A549 (cell line): ENCODE measurements at regions of chr17 and their contacts with region 1.

Region 1: DNA sequence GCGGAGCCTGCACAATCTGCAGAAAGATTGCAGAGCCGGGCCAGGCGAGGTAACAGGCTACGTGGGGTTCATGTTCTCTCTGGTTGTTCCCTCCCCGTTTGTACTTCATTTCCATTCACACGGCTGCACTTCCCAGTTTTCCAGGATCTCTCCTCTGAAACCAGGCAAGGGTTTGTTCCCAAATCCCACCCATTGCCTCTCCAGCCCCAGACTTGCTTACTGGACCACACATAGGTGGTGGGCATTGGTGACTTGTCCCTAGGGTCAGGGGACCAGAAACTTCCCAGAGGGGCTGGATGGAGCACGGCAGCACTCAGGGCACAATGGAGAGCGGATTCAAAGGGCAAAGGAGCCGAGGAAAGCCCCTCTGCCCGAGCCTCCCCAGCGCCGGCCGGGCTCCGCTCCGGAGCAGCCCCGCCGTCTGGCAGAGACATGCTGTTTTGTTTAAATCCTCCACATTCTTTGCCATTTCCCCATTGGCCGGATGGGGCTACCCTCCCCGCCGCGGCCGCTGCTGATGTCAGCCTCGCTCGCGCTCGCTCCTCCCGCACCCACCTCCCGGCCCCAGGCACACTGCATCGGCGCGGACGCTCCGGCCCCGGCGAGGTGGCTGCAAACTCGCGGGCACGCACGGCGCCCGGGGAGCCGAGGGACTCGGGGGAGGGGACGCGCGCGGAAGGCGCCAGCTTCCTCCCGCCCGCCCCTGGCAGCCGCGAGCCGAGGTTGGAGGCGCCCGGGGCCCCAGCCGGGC is at the start of gene PITPNC1:
- DNase-seq: peak; percentile 84 to 86
- ATAC-seq: peak; percentile 72 to 83
- H3K4me3 ChIP-seq: peak within 1 kb of the TSS; percentile 65
- H3K27ac ChIP-seq: peak within 1 kb of the TSS; percentile 77 to 86
- H3K4me1 ChIP-seq: peaks cover 14% of the 10 kb centered on the region; the same call in 2 of the 3 replicates
- CTCF ChIP-seq: 0 out of 3 replicates have a peak, but pooled peaks have one; percentile 14
- EP300 ChIP-seq: no peak
- POLR2A ChIP-seq: peak; percentile 57
- RAD21 ChIP-seq: no peak
- polyA plus RNA-seq, gene PITPNC1: 10.8 and 11.2 TPM in 2 replicates

Region 2: GRCh38 chr17:67390646-67391384 is 13.9 kb after region 1 on chr17:
- CTCF ChIA-PET with region 1: interaction called, 114 read pairs
- POLR2A ChIA-PET with region 1: no interaction called
- DNase-seq: peak; percentile 42 to 83
- ATAC-seq: peak; percentile 80
- H3K4me3 ChIP-seq: no peak overlapping the region
- H3K27ac ChIP-seq: peak overlapping the region; percentile 54 to 68; a peak in 5 of 6 replicates
- H3K4me1 ChIP-seq: peaks cover 19% of the 10 kb centered on the region
- CTCF ChIP-seq: no peak
- EP300 ChIP-seq: peak in 1 of 2 experiments; percentile 54; a peak in 1 of 5 replicates
- POLR2A ChIP-seq: no peak
- RAD21 ChIP-seq: no peak; a peak in 1 of 5 replicates

Region 3: GRCh38 chr17:67441052-67441927 is 64.4 kb after region 1 on chr17:
- CTCF ChIA-PET with region 1: interaction called, 11 read pairs
- POLR2A ChIA-PET with region 1: interaction called, 4 read pairs
- DNase-seq: peak; percentile 81 to 85
- ATAC-seq: peak; percentile 94 to 96
- H3K4me3 ChIP-seq: peak overlapping the region; percentile 8
- H3K27ac ChIP-seq: peak overlapping the region; percentile 56 to 71
- H3K4me1 ChIP-seq: peaks cover 21% of the 10 kb centered on the region
- CTCF ChIP-seq: no peak
- EP300 ChIP-seq: no peak
- POLR2A ChIP-seq: no peak
- RAD21 ChIP-seq: no peak

Region 4: GRCh38 chr17:67475236-67475937 is 98.5 kb after region 1 on chr17:
- CTCF ChIA-PET with region 1: interaction called, 323 read pairs
- POLR2A ChIA-PET with region 1: interaction called, 7 read pairs
- DNase-seq: peak; percentile 82 to 85
- ATAC-seq: peak; percentile 93 to 96
- H3K4me3 ChIP-seq: no peak overlapping the region
- H3K27ac ChIP-seq: no peak overlapping the region
- H3K4me1 ChIP-seq: no peaks in the 10 kb centered on the region
- CTCF ChIP-seq: peak; percentile 92
- EP300 ChIP-seq: no peak
- POLR2A ChIP-seq: no peak
- RAD21 ChIP-seq: peak; percentile 93 to 95

Region 5: GRCh38 chr17:67602956-67603355 is 226.0 kb after region 1 on chr17:
- CTCF ChIA-PET with region 1: interaction called, 30 read pairs
- POLR2A ChIA-PET with region 1: no interaction called
- DNase-seq: peak; percentile 58 to 61
- ATAC-seq: peak; percentile 69 to 78; a peak in 5 of 6 replicates
- H3K4me3 ChIP-seq: no peak overlapping the region
- H3K27ac ChIP-seq: no peak overlapping the region
- H3K4me1 ChIP-seq: no peaks in the 10 kb centered on the region
- CTCF ChIP-seq: peak; percentile 38; the same call in 2 of the 3 replicates
- EP300 ChIP-seq: no peak
- POLR2A ChIP-seq: no peak
- RAD21 ChIP-seq: peak; percentile 58 to 72

Region 6: DNA sequence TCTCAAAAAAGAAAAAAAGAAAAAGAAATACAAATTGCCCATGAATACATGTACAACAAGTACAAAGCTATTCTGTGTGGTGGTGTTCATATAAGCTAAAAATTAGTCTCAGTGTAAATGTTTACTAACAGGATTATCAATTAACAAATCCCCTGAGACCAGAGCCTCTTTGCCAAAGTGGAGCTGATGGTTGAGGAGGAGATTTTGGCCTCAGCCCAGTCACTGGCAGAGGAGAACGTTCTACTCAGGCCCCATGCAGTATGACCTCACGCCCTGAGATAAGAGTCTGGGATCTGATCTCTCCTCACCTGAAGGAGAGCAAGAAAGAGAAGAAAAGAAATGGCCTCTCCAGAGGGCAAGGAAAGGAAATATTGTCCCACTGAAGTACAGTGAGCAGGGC is 305.3 kb after region 1 on chr17:
- CTCF ChIA-PET with region 1: interaction called, 105 read pairs
- POLR2A ChIA-PET with region 1: no interaction called
- DNase-seq: no peak
- ATAC-seq: 0 out of 6 replicates have a peak, but pooled peaks of 1 of the 2 experiments have one; percentile 21
- H3K4me3 ChIP-seq: no peak overlapping the region
- H3K27ac ChIP-seq: no peak overlapping the region
- H3K4me1 ChIP-seq: no peaks in the 10 kb centered on the region
- CTCF ChIP-seq: no peak
- EP300 ChIP-seq: no peak
- POLR2A ChIP-seq: no peak
- RAD21 ChIP-seq: no peak